PC-9 (cell line): ENCODE measurements at regions of chr4 and their contacts with region 1.

Region 1: GRCh38 chr4:16140520-16141249 is 56.9 kb upstream of the PROM1 start:
- DNase-seq: peak; percentile 82 to 95
- H3K4me3 ChIP-seq: no peak overlapping the region
- H3K27ac ChIP-seq: peak overlapping the region; percentile 68
- H3K4me1 ChIP-seq: peaks cover 23% of the 10 kb centered on the region
- H3K27me3 ChIP-seq: no peaks in the 10 kb centered on the region
- CTCF ChIP-seq: no peak

Region 2: DNA sequence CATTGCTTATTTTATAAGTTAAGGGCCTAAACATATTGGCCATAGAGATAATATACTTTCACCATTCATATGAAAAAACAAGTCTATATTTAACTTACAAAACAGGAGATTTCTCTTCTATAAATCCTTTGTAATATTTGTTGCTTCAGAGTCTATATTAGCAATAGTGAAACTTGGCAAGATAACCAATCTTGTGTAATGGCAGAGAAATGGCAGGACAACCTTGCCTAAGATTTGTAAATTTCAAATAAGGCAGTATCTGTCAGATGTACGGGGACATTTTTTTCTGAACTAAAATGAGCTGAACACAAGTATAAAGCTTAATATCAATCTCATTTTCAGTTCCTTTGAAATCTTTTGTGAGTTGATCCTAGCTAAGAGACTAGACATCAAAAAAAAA is 1156.2 kb before region 1 on chr4:
- CTCF ChIA-PET with region 1: no interaction called
- POLR2A ChIA-PET with region 1: no interaction called
- intact Hi-C with region 1: no loop called
- DNase-seq: no peak
- H3K4me3 ChIP-seq: no peak overlapping the region
- H3K27ac ChIP-seq: no peak overlapping the region
- H3K4me1 ChIP-seq: no peaks in the 10 kb centered on the region
- H3K27me3 ChIP-seq: no peaks in the 10 kb centered on the region
- CTCF ChIP-seq: no peak

Region 3: GRCh38 chr4:16034010-16034829 is 106.5 kb before region 1 on chr4:
- CTCF ChIA-PET with region 1: no interaction called
- POLR2A ChIA-PET with region 1: no interaction called
- intact Hi-C with region 1: loop called (anchors 5 kb)
- DNase-seq: peak in 1 of 2 experiments; percentile 49
- H3K4me3 ChIP-seq: no peak overlapping the region
- H3K27ac ChIP-seq: no peak overlapping the region
- H3K4me1 ChIP-seq: no peaks in the 10 kb centered on the region
- H3K27me3 ChIP-seq: no peaks in the 10 kb centered on the region
- CTCF ChIP-seq: no peak

Region 4: GRCh38 chr4:16237715-16238114 is 97.0 kb after region 1 on chr4:
- CTCF ChIA-PET with region 1: no interaction called
- POLR2A ChIA-PET with region 1: no interaction called
- intact Hi-C with region 1: no loop called
- DNase-seq: no peak
- H3K4me3 ChIP-seq: no peak overlapping the region
- H3K27ac ChIP-seq: no peak overlapping the region
- H3K4me1 ChIP-seq: no peaks in the 10 kb centered on the region
- H3K27me3 ChIP-seq: no peaks in the 10 kb centered on the region
- CTCF ChIP-seq: no peak

Region 5: GRCh38 chr4:16344853-16345252 is 204.2 kb after region 1 on chr4:
- CTCF ChIA-PET with region 1: no interaction called
- POLR2A ChIA-PET with region 1: no interaction called
- intact Hi-C with region 1: no loop called
- DNase-seq: no peak
- H3K4me3 ChIP-seq: no peak overlapping the region
- H3K27ac ChIP-seq: no peak overlapping the region
- H3K4me1 ChIP-seq: no peaks in the 10 kb centered on the region
- H3K27me3 ChIP-seq: no peaks in the 10 kb centered on the region
- CTCF ChIP-seq: no peak